ENCODE measurements at regions of chr6 and their contacts with region 1.

Region 1: GRCh38 chr6:26175428-26176181 is 88.4 kb downstream of the HFE start:
- DNase-seq: peak; percentile 77
- H3K4me3 Mint-ChIP-seq: no peak overlapping the region
- H3K27ac Mint-ChIP-seq: no peak overlapping the region
- H3K4me1 Mint-ChIP-seq: peaks cover 34% of the 10 kb centered on the region
- H3K27me3 Mint-ChIP-seq: no peaks in the 10 kb centered on the region

Region 2: DNA sequence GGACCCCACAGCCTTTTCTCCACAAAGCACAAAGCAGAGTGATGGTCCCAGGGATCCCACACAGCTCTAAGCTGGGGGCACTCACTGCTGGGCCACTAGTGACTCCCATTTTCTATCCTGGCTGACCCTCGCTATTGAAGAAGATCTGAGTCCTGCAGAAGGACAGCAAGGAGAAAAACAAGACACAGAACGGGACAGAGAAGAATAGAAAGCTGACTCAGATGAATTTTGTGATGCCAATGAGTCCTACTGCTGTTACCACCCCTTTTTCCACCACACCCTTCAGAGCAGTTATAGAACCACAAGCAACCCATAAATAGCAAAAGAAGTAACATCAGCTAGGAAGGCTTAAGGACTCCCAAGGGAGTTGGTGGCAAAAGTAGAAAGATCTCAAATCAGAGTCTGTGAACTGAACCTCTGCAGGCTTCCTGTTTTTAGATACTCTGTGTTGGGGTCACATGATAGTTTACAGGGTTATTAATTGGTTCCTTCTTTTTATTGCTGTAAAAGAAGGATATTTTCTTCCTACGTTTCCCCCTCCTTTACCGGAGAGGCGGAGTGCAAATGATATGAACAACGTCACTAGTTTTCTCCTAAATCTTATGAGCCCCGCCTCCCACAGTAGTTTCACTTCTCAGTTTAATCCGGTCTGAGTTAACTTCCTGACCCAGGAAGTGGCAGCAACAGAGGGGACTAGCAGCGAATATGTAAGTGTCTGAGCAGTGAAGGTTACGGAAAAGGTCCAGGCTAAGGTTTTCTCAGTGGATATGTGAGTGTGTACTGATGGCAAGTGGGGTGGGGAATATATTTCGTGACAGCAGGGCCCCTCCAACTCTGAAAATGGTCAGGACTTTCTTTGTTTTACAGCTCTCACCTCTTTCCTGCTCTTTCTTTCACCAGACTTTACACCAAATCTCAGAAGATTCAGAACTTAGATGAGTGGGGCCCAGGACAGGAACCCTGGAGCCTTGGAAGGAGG is 213.2 kb before region 1 on chr6 and contains the start of gene TRIM38:
- CTCF ChIA-PET with region 1: no interaction called
- intact Hi-C with region 1: no loop called
- DNase-seq: peak; percentile 91
- H3K4me3 Mint-ChIP-seq: peak within 1 kb of the TSS; percentile 99
- H3K27ac Mint-ChIP-seq: peak within 1 kb of the TSS; percentile 99
- H3K4me1 Mint-ChIP-seq: peaks cover 76% of the 10 kb centered on the region
- H3K27me3 Mint-ChIP-seq: no peaks in the 10 kb centered on the region
- total RNA-seq, gene TRIM38: 19.1 to 19.7 TPM

Region 3: GRCh38 chr6:26216356-26216885 is 40.8 kb after region 1 on chr6:
- CTCF ChIA-PET with region 1: interaction called, 5 read pairs
- intact Hi-C with region 1: loop called (anchors 1 kb)
- DNase-seq: peak; percentile 85
- H3K4me3 Mint-ChIP-seq: no peak overlapping the region
- H3K27ac Mint-ChIP-seq: no peak overlapping the region
- H3K4me1 Mint-ChIP-seq: peaks cover 2% of the 10 kb centered on the region
- H3K27me3 Mint-ChIP-seq: no peaks in the 10 kb centered on the region

Region 4: GRCh38 chr6:26270903-26271667 is 95.5 kb after region 1 on chr6:
- CTCF ChIA-PET with region 1: interaction called, 4 read pairs
- intact Hi-C with region 1: loop called (anchors 1 kb)
- DNase-seq: peak; percentile 92
- H3K4me3 Mint-ChIP-seq: no peak overlapping the region
- H3K27ac Mint-ChIP-seq: no peak overlapping the region
- H3K4me1 Mint-ChIP-seq: peaks cover 9% of the 10 kb centered on the region
- H3K27me3 Mint-ChIP-seq: peaks cover 5% of the 10 kb centered on the region

Region 5: DNA sequence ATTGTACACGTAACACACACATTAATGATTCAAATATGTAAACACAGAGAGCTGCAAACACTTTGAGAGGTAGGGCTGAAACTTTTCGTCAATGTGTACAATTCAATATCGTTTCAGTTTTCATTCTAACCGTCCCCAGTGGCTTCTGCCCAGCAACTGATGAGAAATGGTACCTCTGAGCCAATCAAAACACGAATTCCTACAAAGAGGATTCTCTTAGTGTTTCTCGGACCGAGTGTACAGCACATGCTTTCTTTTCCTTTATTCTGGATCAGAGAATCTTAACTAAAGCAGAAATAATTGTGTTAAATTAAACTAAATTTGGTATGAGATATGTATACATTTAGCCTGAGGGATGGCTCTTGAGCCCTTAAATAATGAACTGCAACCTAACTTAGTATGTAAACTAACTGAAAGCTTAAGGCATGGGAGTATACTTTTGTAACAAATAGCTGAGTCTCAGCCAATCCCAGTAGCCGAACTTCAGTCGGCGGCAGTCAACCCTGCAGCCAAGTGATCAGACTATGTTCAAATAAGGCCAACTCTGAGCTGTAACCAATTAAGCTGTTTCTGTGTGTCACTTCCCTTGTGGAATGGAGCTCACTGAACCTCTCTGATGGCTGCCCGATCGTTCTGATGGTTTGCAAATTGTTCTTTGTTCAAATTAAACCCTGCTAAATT is 298.3 kb after region 1 on chr6:
- CTCF ChIA-PET with region 1: no interaction called
- intact Hi-C with region 1: loop called (anchors 10 kb)
- DNase-seq: peak; percentile 90
- H3K4me3 Mint-ChIP-seq: peak overlapping the region; percentile 98
- H3K27ac Mint-ChIP-seq: peak overlapping the region; percentile 100
- H3K4me1 Mint-ChIP-seq: peaks cover 40% of the 10 kb centered on the region
- H3K27me3 Mint-ChIP-seq: no peaks in the 10 kb centered on the region

Region 6: GRCh38 chr6:26568601-26569432 is 393.2 kb after region 1 on chr6:
- CTCF ChIA-PET with region 1: no interaction called
- intact Hi-C with region 1: loop called (anchors 1 kb)
- DNase-seq: peak; percentile 99
- H3K4me3 Mint-ChIP-seq: peak overlapping the region; percentile 95
- H3K27ac Mint-ChIP-seq: peak overlapping the region; percentile 91
- H3K4me1 Mint-ChIP-seq: peaks cover 33% of the 10 kb centered on the region
- H3K27me3 Mint-ChIP-seq: peaks cover 4% of the 10 kb centered on the region